ENCODE measurements at regions of chr11 and their contacts with region 1.

Region 1: DNA sequence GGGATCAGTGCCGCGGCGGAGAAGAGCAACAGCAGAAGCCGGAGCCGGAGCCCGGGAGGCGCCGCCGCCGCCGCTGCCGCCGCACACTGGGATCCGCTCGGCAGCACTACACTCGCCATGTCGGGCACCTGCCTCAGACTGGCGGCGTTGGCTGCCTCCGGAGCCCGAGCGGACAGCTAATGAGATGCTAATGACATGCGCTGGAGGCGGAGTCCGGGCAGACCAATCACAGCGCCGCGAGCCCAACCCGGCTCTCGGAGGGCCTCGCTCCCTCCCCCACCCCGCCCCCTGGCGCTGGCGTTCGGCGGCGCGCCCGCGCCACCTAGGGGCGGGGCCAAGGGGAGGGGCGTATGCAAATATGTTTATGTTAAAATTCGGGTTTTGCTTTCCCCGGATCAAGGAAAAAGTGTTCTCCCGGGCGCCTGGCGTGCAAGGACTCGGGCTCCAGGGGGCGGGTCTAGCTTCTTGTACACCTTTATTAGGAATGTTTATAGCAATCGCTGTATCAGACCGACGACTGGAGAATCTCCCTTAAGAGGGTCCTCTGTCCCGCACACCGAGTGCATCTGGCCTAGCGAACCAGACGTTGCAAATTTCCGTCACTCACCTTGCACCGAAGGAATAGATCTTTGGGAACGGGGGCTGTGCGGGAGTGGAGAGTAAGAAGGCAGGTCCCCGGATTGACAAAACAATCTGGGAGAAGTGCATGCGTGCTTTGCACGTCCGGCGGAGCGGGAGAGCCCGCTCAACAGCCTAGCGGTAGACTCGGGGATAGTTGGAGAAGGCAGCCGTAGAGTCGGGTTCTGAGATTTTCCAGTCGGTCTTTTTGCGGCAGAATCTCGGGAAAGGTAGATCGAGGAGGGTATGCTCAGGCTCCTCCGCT is at the start of gene CADM1:
- DNase-seq: peak; percentile 90
- H3K4me3 ChIP-seq: peak within 1 kb of the TSS; percentile 74 to 99 (median 83)
- H3K27ac ChIP-seq: peak within 1 kb of the TSS; percentile 61
- H3K4me1 ChIP-seq: peaks cover 19% of the 10 kb centered on the region
- H3K27me3 ChIP-seq: no peaks in the 10 kb centered on the region
- CTCF ChIP-seq: peak; percentile 50 to 83
- total RNA-seq, gene CADM1: 16.9 to 19.3 TPM

Region 2: GRCh38 chr11:114738954-114739353 is 765.6 kb before region 1 on chr11:
- CTCF ChIA-PET with region 1: no interaction called
- dilution Hi-C with region 1: no loop called
- in situ Hi-C with region 1: no loop called
- intact Hi-C with region 1: loop called (anchors 2 kb)
- DNase-seq: peak; percentile 33
- H3K4me3 ChIP-seq: no peak overlapping the region
- H3K27ac ChIP-seq: no peak overlapping the region
- H3K4me1 ChIP-seq: no peaks in the 10 kb centered on the region
- H3K27me3 ChIP-seq: peaks cover 2% of the 10 kb centered on the region
- CTCF ChIP-seq: peak; percentile 92 to 93

Region 3: DNA sequence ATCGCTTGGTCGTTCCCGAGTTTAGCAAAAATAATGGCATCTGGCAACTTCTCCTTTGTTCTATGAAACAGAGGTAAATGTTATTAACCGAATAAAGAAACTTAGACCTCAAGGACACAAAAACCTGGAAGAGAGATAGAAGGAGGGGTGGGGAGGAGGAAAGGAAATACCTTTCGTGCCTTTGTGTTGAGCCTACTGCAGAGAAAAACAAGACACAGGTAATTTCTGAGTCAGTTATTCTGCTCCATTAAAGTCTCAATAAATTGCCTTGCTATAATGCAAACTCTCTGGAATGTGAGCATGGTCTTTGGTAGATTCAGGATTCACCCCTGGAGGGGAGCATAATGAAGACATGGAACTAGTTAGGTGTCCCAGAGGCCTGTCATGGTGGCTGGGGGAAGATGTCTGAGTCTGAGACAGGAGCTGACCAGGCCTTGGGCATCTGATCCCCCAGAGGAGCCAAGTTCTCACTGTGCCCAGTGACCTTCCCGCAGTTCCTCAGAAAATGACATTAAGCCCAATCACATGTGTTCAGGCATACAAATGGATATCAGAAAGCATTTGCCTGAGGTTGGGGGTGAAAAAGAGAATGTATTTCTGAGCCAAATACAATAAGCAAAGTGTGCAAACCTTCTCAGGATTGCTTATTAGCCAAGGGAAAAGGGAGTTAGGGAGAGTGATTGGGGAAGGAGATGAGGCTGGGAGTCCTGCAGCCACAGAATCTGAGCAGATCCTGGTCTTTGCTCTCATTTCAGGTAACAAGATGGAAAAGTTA is 72.3 kb after region 1 on chr11:
- CTCF ChIA-PET with region 1: no interaction called
- dilution Hi-C with region 1: no loop called
- in situ Hi-C with region 1: no loop called
- intact Hi-C with region 1: loop called (anchors 2 kb)
- DNase-seq: no peak
- H3K4me3 ChIP-seq: no peak overlapping the region
- H3K27ac ChIP-seq: peak overlapping the region; percentile 27
- H3K4me1 ChIP-seq: peaks cover 57% of the 10 kb centered on the region
- H3K27me3 ChIP-seq: no peaks in the 10 kb centered on the region
- CTCF ChIP-seq: no peak

Region 4: DNA sequence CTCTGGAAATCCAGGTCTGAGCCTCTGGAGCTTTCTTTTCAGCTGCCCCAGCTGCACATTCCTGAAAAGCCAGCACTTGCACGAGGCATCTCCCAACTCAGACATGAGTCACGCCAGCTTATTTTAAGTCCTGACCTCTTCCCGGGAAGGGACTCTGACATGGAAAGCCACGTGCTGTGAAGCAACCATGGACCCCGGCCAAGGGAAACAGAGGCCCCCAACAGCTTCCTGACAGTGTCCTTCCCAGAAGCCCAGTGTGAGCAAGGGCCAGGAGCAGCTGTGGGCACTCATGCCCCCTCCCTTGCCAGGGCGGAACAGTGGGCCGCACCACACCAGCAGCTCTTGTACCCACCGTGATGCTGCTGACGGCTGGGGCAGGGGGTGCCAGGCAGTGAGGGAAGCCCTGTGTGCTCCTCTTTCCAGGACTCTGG is 118.5 kb after region 1 on chr11:
- CTCF ChIA-PET with region 1: interaction called, 4 read pairs
- dilution Hi-C with region 1: no loop called
- in situ Hi-C with region 1: no loop called
- intact Hi-C with region 1: loop called (anchors 2 kb)
- DNase-seq: peak; percentile 68
- H3K4me3 ChIP-seq: no peak overlapping the region
- H3K27ac ChIP-seq: peak overlapping the region; percentile 5
- H3K4me1 ChIP-seq: peaks cover 34% of the 10 kb centered on the region
- H3K27me3 ChIP-seq: no peaks in the 10 kb centered on the region
- CTCF ChIP-seq: no peak

Region 5: DNA sequence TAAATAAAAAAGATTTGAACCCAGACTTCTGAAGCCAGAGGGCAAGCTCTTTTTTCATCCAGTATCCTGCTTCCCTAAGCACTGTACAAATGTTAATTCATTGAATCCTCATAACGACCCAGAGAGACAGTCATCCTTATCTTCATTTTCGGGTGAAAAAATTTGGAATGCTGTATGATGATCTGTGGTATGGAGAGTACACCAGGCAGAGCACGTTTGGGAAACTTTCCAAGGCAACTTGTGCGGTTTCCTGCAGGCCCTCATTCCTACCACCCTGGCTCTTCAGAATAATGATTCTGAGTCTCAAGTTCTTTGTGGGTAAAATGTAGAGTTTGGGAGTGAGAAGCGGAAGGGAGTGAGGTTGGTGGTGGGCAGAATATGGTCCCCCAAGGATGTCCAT is 177.6 kb after region 1 on chr11:
- CTCF ChIA-PET with region 1: no interaction called
- dilution Hi-C with region 1: no loop called
- in situ Hi-C with region 1: no loop called
- intact Hi-C with region 1: no loop called
- DNase-seq: no peak
- H3K4me3 ChIP-seq: no peak overlapping the region
- H3K27ac ChIP-seq: no peak overlapping the region
- H3K4me1 ChIP-seq: peaks cover 6% of the 10 kb centered on the region
- H3K27me3 ChIP-seq: peaks cover 3% of the 10 kb centered on the region
- CTCF ChIP-seq: no peak

Region 6: GRCh38 chr11:115912484-115912945 is 408.0 kb after region 1 on chr11:
- CTCF ChIA-PET with region 1: no interaction called
- dilution Hi-C with region 1: no loop called
- in situ Hi-C with region 1: loop called in 1 of 2 experiments (anchors 25 kb)
- intact Hi-C with region 1: loop called (anchors 2 kb)
- DNase-seq: peak; percentile 30
- H3K4me3 ChIP-seq: no peak overlapping the region
- H3K27ac ChIP-seq: no peak overlapping the region
- H3K4me1 ChIP-seq: no peaks in the 10 kb centered on the region
- H3K27me3 ChIP-seq: no peaks in the 10 kb centered on the region
- CTCF ChIP-seq: peak; percentile 60 to 71